Endothelial cell of umbilical vein (primary cell): ENCODE measurements at regions of chr3 and their contacts with region 1.

Region 1: DNA sequence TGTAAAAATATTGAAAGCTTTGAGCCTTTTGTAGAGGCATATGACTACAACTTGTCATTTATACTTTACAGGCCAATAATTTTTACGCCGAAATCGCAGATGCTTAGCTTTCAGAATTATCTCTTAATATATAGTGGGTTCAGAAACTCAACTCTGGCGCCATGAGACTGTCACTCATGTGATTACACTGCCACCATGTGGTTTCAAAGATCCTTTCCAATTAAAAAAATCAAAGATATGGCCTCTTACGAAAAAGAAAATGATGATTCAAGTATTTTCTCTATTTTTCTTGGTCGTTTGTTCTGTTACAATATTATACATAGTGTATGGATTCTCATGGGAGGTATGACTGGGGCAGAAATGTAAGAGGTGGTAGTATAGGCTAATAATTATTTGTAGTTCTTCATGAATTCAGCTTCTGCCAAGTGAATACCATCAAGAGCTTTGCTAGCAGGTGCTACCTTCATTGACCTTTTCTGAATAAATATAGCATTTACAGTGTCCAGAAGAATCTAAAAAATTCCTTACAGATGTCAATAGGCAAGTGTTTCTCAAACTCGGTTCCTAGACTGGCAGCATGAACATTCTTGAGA is 751.7 kb upstream of the GOLIM4 start:
- DNase-seq: peak; percentile 68
- H3K4me3 ChIP-seq: no peak overlapping the region
- H3K27ac ChIP-seq: no peak overlapping the region
- H3K4me1 ChIP-seq: no peaks in the 10 kb centered on the region
- H3K27me3 ChIP-seq: peaks cover 21 to 36% of the 10 kb centered on the region in 2 experiments
- CTCF ChIP-seq: peak; percentile 43 to 45
- POLR2A ChIP-seq: no peak

Region 2: DNA sequence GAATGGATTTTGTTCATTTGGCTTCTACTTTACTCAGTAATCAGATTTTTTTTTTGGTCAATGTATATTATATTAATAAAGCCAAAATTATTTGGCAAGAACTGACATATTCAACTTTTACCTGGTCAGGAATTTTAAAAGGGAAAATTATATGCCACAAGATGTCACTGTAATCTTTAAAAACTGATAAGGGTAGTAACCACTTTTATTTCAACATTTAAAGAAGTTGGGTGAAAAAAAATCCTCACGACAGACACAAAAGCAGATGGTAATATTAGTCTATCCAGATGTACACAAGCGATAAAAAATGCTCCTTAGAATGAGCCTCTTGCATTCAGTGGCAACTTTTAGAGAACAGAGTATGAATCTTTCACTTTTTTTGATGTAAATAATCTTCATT is 1009.9 kb before region 1 on chr3:
- CTCF ChIA-PET with region 1: no interaction called
- POLR2A ChIA-PET with region 1: no interaction called
- dilution Hi-C with region 1: no loop called
- intact Hi-C with region 1: no loop called
- DNase-seq: no peak
- H3K4me3 ChIP-seq: no peak overlapping the region
- H3K27ac ChIP-seq: no peak overlapping the region
- H3K4me1 ChIP-seq: no peaks in the 10 kb centered on the region
- H3K27me3 ChIP-seq: no peaks in the 10 kb centered on the region
- CTCF ChIP-seq: no peak
- POLR2A ChIP-seq: no peak

Region 3: DNA sequence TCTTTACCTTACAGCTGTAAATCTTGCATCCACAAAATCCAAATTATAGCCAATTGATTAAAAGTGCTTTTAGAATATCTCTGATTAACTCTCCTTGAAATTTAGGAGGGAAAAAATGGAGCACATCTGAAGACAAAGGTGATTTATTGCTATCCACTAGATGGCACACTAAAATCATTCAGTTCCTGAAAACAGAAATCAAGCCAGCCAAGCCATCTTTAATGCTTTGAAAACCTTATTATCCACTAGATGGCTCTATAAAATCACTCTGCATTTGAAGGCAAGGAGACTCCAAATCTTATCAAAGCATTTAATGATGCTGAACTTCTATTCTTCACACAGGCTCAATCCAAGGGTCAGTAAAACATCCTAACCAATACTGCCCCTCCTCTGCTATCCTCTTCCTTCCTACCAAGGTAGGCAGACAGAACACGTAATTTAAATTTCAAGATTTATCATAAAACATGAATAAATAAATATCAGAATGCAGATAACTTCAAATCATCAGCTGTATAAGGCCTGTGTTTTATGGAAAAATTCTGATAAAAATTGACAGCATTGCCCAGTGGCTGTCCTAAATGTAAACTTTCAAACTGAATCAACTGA is 800.1 kb before region 1 on chr3:
- CTCF ChIA-PET with region 1: interaction called, 14 read pairs
- POLR2A ChIA-PET with region 1: no interaction called
- dilution Hi-C with region 1: no loop called
- intact Hi-C with region 1: loop called (anchors 1 kb)
- DNase-seq: peak; percentile 83
- H3K4me3 ChIP-seq: no peak overlapping the region
- H3K27ac ChIP-seq: no peak overlapping the region
- H3K4me1 ChIP-seq: peaks cover 6% of the 10 kb centered on the region
- H3K27me3 ChIP-seq: no peaks in the 10 kb centered on the region
- CTCF ChIP-seq: peak; percentile 59
- POLR2A ChIP-seq: no peak

Region 4: GRCh38 chr3:168501570-168501969 is 345.8 kb before region 1 on chr3:
- CTCF ChIA-PET with region 1: interaction called, 10 read pairs
- POLR2A ChIA-PET with region 1: no interaction called
- dilution Hi-C with region 1: no loop called
- intact Hi-C with region 1: no loop called
- DNase-seq: no peak
- H3K4me3 ChIP-seq: no peak overlapping the region
- H3K27ac ChIP-seq: no peak overlapping the region
- H3K4me1 ChIP-seq: no peaks in the 10 kb centered on the region
- H3K27me3 ChIP-seq: peaks cover 0 to 4% of the 10 kb centered on the region in 2 experiments
- CTCF ChIP-seq: no peak
- POLR2A ChIP-seq: no peak

Region 5: GRCh38 chr3:168531116-168531515 is 316.3 kb before region 1 on chr3:
- CTCF ChIA-PET with region 1: interaction called, 15 read pairs
- POLR2A ChIA-PET with region 1: no interaction called
- dilution Hi-C with region 1: no loop called
- intact Hi-C with region 1: no loop called
- DNase-seq: no peak
- H3K4me3 ChIP-seq: no peak overlapping the region
- H3K27ac ChIP-seq: no peak overlapping the region
- H3K4me1 ChIP-seq: no peaks in the 10 kb centered on the region
- H3K27me3 ChIP-seq: peaks cover 0 to 2% of the 10 kb centered on the region in 2 experiments
- CTCF ChIP-seq: no peak
- POLR2A ChIP-seq: no peak

Region 6: GRCh38 chr3:168671082-168671481 is 176.3 kb before region 1 on chr3:
- CTCF ChIA-PET with region 1: interaction called, 11 read pairs
- POLR2A ChIA-PET with region 1: no interaction called
- dilution Hi-C with region 1: no loop called
- intact Hi-C with region 1: no loop called
- DNase-seq: no peak
- H3K4me3 ChIP-seq: no peak overlapping the region
- H3K27ac ChIP-seq: no peak overlapping the region
- H3K4me1 ChIP-seq: no peaks in the 10 kb centered on the region
- H3K27me3 ChIP-seq: peaks cover 0 to 3% of the 10 kb centered on the region in 2 experiments
- CTCF ChIP-seq: no peak
- POLR2A ChIP-seq: no peak

Region 7: GRCh38 chr3:168794427-168794826 is 53.0 kb before region 1 on chr3:
- CTCF ChIA-PET with region 1: interaction called, 12 read pairs
- POLR2A ChIA-PET with region 1: no interaction called
- dilution Hi-C with region 1: no loop called
- intact Hi-C with region 1: no loop called
- DNase-seq: peak; percentile 93
- H3K4me3 ChIP-seq: no peak overlapping the region
- H3K27ac ChIP-seq: peak overlapping the region; percentile 75
- H3K4me1 ChIP-seq: peaks cover 23% of the 10 kb centered on the region
- H3K27me3 ChIP-seq: no peaks in the 10 kb centered on the region
- CTCF ChIP-seq: no peak
- POLR2A ChIP-seq: peak; percentile 74

Region 8: GRCh38 chr3:168872826-168873225 is 25.4 kb after region 1 on chr3:
- CTCF ChIA-PET with region 1: no interaction called
- POLR2A ChIA-PET with region 1: no interaction called
- dilution Hi-C with region 1: no loop called
- intact Hi-C with region 1: no loop called
- DNase-seq: no peak
- H3K4me3 ChIP-seq: no peak overlapping the region
- H3K27ac ChIP-seq: no peak overlapping the region
- H3K4me1 ChIP-seq: peaks cover 16% of the 10 kb centered on the region
- H3K27me3 ChIP-seq: no peaks in the 10 kb centered on the region
- CTCF ChIP-seq: no peak
- POLR2A ChIP-seq: no peak

Region 9: GRCh38 chr3:169668957-169669681 is 821.7 kb after region 1 on chr3:
- CTCF ChIA-PET with region 1: interaction called, 20 read pairs
- POLR2A ChIA-PET with region 1: no interaction called
- dilution Hi-C with region 1: no loop called
- intact Hi-C with region 1: no loop called
- DNase-seq: peak; percentile 84
- H3K4me3 ChIP-seq: peak overlapping the region; percentile 45 to 77 (median 70)
- H3K27ac ChIP-seq: peak overlapping the region; percentile 51
- H3K4me1 ChIP-seq: peaks cover 42% of the 10 kb centered on the region
- H3K27me3 ChIP-seq: no peaks in the 10 kb centered on the region
- CTCF ChIP-seq: peak; percentile 94
- POLR2A ChIP-seq: no peak